Esophagus muscularis mucosa (tissue), 4 donors: ENCODE measurements at regions of chr16 and their contacts with region 1.

Region 1: DNA sequence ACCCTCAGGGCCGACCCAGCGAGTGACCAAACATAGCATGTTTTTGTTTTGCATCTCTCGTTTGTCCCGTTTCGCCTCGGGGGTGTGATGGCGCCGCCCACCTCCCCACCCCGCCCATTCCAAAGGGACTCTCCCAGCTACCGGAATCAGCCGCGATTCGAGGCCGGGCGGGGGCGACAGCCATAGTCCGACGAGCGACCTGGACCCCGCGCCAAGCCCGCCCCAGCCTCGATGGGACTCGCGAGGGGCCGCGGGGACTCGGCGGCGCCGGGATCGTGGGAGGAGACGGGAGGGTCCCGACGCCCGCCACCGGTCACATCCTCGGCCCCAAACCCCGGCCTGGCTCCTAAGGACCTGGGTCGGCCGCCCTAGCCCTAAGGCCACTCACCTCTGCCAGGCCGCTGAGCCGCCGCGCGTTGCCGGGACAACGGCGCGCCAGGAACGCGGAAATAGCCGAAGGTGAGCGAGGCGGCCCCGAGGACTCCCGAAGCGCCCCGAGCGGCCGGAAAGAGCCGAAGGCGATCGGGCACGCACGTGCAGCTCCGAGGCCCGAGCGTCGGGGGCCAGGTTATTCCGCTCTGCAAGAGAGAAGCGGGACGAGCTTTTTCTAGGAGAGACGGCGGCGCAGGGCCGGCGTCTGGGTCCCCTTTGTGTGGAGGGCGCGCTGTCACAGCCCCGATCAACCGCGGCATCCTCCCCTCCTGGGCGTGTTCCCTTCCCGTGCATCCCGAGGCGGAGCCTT is 1.4 kb downstream of the IFT140 start:
- DNase-seq: peak; percentile 96
- H3K4me3 ChIP-seq: peak overlapping the region; percentile 88 to 98 (median 94)
- H3K27ac ChIP-seq: peak overlapping the region; percentile 79 to 94 (median 86)
- H3K4me1 ChIP-seq: peaks cover 36 to 53% (median 46%) of the 10 kb centered on the region in 4 donors
- H3K27me3 ChIP-seq: no peaks in the 10 kb centered on the region
- CTCF ChIP-seq: no peak
- EP300 ChIP-seq: no peak
- POLR2A ChIP-seq: no peak

Region 2: GRCh38 chr16:1749152-1750117 is 139.0 kb after region 1 on chr16:
- intact Hi-C with region 1: no loop called
- DNase-seq: no peak
- H3K4me3 ChIP-seq: no peak overlapping the region
- H3K27ac ChIP-seq: no peak overlapping the region
- H3K4me1 ChIP-seq: no peaks in the 10 kb centered on the region
- H3K27me3 ChIP-seq: no peaks in the 10 kb centered on the region
- CTCF ChIP-seq: no peak
- EP300 ChIP-seq: no peak
- POLR2A ChIP-seq: no peak

Region 3: GRCh38 chr16:1772736-1773584 is 162.5 kb after region 1 on chr16 and contains the starts of genes EME2 and MRPS34:
- intact Hi-C with region 1: loop called (anchors 5 kb)
- DNase-seq: no peak
- H3K4me3 ChIP-seq: peak within 1 kb of the TSS; percentile 72 to 100 (median 88)
- H3K27ac ChIP-seq: peak within 1 kb of the TSS; percentile 87 to 95 (median 90)
- H3K4me1 ChIP-seq: peaks cover 36 to 64% (median 57%) of the 10 kb centered on the region in 4 donors
- H3K27me3 ChIP-seq: no peaks in the 10 kb centered on the region
- CTCF ChIP-seq: peak; percentile 67 to 75 (median 72)
- EP300 ChIP-seq: no peak
- POLR2A ChIP-seq: no peak
- total RNA-seq, gene EME2: 5.5 to 10.4 (median 6.5) TPM
- total RNA-seq, gene MRPS34: 47.1 to 75.2 (median 64.2) TPM

Region 4: GRCh38 chr16:3283525-3284447 is 1673.3 kb after region 1 on chr16:
- intact Hi-C with region 1: no loop called
- DNase-seq: no peak
- H3K4me3 ChIP-seq: peak overlapping the region; percentile 80 to 100 (median 99)
- H3K27ac ChIP-seq: peak overlapping the region; percentile 95 to 100 (median 98)
- H3K4me1 ChIP-seq: peaks cover 21 to 36% (median 35%) of the 10 kb centered on the region in 4 donors
- H3K27me3 ChIP-seq: no peaks in the 10 kb centered on the region
- CTCF ChIP-seq: no peak
- EP300 ChIP-seq: no peak
- POLR2A ChIP-seq: no peak